AG04450 (cell line): ENCODE measurements at regions of chr7 and their contacts with region 1.

Region 1: DNA sequence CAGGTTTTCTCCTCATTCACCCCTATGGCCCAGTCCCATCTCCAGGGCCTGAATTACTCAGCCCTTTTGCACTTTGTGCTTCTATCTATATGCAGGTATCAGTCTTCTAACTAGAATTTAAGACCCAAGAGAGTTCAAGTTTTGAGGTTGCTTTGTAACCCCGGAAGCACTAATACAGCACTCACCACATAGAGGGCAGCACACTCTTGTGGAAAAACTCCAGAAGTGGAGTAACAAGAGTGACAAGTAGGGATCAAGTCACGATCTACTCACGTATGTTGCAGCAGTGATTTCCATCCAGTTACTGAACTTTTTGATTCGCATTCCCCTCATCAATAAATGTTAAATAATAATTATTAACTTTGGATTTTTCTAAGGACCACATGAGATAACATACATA is 151.0 kb downstream of the CHCHD3 start:
- DNase-seq: no peak
- H3K4me3 ChIP-seq: no peak overlapping the region
- H3K27ac ChIP-seq: no peak overlapping the region
- H3K27me3 ChIP-seq: no peaks in the 10 kb centered on the region
- CTCF ChIP-seq: peak; percentile 32; the same call in 1 of the 2 replicates

Region 2: GRCh38 chr7:132580717-132581285 is 350.1 kb before region 1 on chr7:
- CTCF ChIA-PET with region 1: no interaction called
- POLR2A ChIA-PET with region 1: no interaction called
- DNase-seq: peak; percentile 36
- H3K4me3 ChIP-seq: no peak overlapping the region
- H3K27ac ChIP-seq: no peak overlapping the region
- H3K27me3 ChIP-seq: peaks cover 29% of the 10 kb centered on the region
- CTCF ChIP-seq: peak; percentile 75

Region 3: DNA sequence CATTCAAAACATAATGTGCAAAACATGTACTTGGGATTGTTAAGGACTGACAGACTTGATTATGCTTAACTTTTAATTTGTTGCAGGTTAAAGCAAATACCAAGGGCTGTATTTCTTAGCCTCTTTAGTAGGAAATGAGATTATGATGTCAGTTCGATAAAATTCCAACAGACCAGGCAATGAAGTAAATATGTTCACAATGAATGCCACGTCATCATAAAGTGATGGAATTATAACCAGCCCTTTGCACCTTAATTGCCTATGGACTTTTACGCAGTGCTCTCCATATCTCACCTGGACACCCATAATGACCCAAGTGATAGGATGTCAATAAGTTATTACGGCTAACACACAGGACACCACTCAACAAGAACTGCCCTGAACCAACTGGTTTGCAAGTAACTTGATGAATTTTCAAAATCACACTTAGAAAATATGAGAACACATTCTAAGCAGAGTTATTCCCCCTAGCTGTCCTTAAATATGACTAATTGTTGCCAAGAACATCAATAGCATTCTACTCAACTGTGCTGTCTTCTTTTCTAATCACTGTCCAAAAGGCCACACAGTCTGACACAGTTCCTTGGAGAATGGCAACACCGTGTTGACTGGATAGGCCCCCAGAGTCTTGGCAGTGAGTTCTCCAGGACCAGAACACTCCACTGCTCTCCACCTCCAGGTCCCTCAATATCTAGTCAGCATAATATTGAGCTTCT is 36.0 kb after region 1 on chr7:
- CTCF ChIA-PET with region 1: interaction called, 12 read pairs
- POLR2A ChIA-PET with region 1: no interaction called
- DNase-seq: no peak
- H3K4me3 ChIP-seq: no peak overlapping the region
- H3K27ac ChIP-seq: no peak overlapping the region
- H3K27me3 ChIP-seq: no peaks in the 10 kb centered on the region
- CTCF ChIP-seq: no peak